Activated CD8-positive, alpha-beta T cell treated with anti-CD3 and anti-CD28 coated beads for 36 hours (primary cell): ENCODE measurements at regions of chr4 and their contacts with region 1.

Region 1: GRCh38 chr4:88646528-88647280 is 50.9 kb downstream of the NAP1L5 start:
- DNase-seq: no peak
- ATAC-seq: no peak
- H3K4me3 Mint-ChIP-seq: no peak overlapping the region
- H3K27ac Mint-ChIP-seq: no peak overlapping the region
- H3K4me1 Mint-ChIP-seq: peaks cover 49% of the 10 kb centered on the region
- H3K27me3 Mint-ChIP-seq: no peaks in the 10 kb centered on the region
- CTCF ChIP-seq: no peak

Region 2: DNA sequence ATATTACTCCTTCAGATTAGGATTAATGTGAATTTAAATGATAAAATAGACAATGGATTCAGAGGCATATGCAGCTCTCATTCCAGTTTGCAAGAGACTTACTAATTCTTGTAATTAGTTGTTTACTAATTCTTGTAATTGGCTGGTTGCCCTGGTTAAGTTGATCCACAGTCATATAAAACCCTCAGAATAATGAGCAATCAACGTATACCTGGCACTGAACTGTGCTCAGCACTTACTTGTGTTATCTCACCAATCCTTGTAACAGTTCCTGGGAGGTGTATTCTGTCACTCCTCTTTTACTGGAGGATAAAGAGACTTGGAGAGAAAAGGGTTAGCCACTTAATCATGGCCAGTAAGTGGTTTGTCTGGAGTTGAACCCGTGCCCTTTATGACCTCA is 179.3 kb before region 1 on chr4:
- CTCF ChIA-PET with region 1: no interaction called
- POLR2A ChIA-PET with region 1: no interaction called
- intact Hi-C with region 1: no loop called
- DNase-seq: no peak
- ATAC-seq: no peak
- H3K4me3 Mint-ChIP-seq: no peak overlapping the region
- H3K27ac Mint-ChIP-seq: no peak overlapping the region
- H3K4me1 Mint-ChIP-seq: peaks cover 6% of the 10 kb centered on the region
- H3K27me3 Mint-ChIP-seq: no peaks in the 10 kb centered on the region
- CTCF ChIP-seq: no peak

Region 3: DNA sequence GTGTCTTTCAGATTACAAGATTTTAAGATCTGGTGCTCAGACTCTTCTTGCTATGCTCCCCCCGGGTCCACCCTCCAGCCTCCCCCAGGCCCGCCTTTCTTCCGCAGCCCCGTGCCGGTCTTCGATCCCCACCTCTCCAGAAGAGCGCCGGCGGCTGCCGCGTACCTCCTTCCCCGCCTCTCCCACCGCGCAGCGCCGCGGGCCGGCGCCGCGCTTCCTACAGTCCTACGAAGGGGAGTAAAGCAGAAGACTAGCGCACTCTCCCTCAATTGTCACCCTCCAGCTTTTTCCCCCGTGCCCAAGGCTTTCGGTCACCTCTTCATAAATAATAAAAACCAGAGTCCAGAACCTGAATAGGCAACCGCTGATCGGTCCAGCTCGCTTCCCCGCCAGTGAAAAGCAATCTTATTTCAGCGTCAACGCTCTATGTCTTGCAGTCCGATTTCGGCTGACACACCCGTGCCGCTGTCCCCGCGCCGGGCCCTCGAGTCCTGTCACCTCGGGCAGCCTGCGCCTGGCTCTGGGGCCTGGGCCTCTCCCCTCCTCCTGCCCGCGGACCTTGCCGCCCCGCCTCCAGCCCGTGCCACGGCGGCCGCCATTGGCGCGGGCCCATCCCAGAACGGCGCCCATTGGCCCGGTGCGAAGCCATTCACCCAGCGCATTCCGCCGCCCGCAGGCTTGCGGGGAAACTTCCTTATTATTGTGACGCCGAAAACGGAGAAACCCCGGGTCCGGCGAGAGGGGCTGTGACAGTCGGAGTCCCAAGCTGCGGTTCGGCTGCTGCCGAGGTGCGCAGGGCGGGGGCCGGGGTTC is 54.7 kb before region 1 on chr4 and contains the start of gene HERC3:
- CTCF ChIA-PET with region 1: no interaction called
- POLR2A ChIA-PET with region 1: interaction called, 4 read pairs
- intact Hi-C with region 1: loop called (anchors 5 kb)
- DNase-seq: peak; percentile 87
- ATAC-seq: peak; percentile 87
- H3K4me3 Mint-ChIP-seq: peak within 1 kb of the TSS; percentile 84
- H3K27ac Mint-ChIP-seq: peak within 1 kb of the TSS; percentile 80
- H3K4me1 Mint-ChIP-seq: peaks cover 38% of the 10 kb centered on the region
- H3K27me3 Mint-ChIP-seq: peaks cover 2% of the 10 kb centered on the region
- CTCF ChIP-seq: no peak
- total RNA-seq, gene HERC3: 59.7 to 66.4 TPM